Ascending aorta (tissue), 2 donors: ENCODE measurements at regions of chr4 and their contacts with region 1.

Region 1: GRCh38 chr4:6986781-6987587 is 56.2 kb upstream of the TADA2B start:
- DNase-seq: peak; percentile 75 to 96
- H3K4me3 ChIP-seq: peak overlapping the region; percentile 65 to 83
- H3K27ac ChIP-seq: peak overlapping the region; percentile 92
- H3K4me1 ChIP-seq: peaks cover 9 to 31% of the 10 kb centered on the region in 2 donors
- H3K27me3 ChIP-seq: no peaks in the 10 kb centered on the region
- CTCF ChIP-seq: no peak

Region 2: DNA sequence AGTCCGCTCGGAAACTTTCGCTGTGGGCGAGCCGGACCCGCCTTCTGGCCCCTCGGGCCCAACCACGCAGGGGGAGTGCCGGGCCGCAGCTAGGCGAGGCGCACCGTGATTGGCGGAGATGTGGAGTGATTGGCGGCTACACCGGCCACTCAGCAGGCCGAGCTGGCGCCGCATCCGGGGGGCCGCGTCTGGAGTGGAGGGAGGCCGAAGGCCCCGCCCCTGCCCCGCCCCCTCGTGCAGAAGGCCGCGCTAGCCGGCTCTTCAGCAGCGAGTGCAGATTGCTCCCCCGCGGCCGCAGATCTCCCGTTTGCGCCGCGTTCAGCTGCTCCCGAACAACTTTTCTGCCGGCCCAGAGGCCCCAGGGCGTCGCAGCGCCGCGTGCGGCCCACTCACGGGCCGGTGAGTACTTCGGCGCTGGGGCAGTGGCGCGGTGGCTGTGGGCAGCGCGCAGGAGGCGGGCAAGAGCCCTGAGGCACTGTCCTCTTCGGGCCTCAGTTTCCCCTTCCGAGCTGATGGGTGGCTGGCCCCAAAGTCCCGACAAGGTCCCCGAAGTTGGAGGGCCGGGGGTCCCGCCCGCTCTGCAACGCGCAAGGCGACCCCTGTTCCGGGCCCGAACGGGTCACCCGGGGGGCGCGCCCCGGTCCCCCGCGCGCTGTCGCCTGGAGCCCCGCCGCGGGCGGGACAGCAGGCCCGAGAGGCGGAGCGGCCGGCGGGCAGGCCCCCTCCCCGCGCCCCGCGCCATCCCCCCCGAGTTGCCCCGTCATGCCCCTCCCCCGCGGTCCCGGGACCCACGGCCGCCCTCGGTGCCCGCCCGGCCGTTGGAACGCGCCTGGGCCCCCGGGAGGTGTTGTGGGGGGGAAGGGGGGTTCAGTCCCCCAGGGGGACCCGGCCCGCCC is 717.1 kb before region 1 on chr4 and contains the start of gene WFS1:
- intact Hi-C with region 1: loop called (anchors 2 kb)
- DNase-seq: peak; percentile 92 to 99
- H3K4me3 ChIP-seq: peak within 1 kb of the TSS; percentile 82 to 95
- H3K27ac ChIP-seq: peak within 1 kb of the TSS; percentile 87
- H3K4me1 ChIP-seq: peaks cover 25 to 38% of the 10 kb centered on the region in 2 donors
- H3K27me3 ChIP-seq: no peaks in the 10 kb centered on the region
- CTCF ChIP-seq: no peak
- total RNA-seq, gene WFS1: 166 TPM

Region 3: GRCh38 chr4:6372649-6373525 is 614.1 kb before region 1 on chr4:
- intact Hi-C with region 1: no loop called
- DNase-seq: no peak
- H3K4me3 ChIP-seq: no peak overlapping the region
- H3K27ac ChIP-seq: no peak overlapping the region
- H3K4me1 ChIP-seq: no peaks in the 10 kb centered on the region
- H3K27me3 ChIP-seq: no peaks in the 10 kb centered on the region
- CTCF ChIP-seq: no peak

Region 4: DNA sequence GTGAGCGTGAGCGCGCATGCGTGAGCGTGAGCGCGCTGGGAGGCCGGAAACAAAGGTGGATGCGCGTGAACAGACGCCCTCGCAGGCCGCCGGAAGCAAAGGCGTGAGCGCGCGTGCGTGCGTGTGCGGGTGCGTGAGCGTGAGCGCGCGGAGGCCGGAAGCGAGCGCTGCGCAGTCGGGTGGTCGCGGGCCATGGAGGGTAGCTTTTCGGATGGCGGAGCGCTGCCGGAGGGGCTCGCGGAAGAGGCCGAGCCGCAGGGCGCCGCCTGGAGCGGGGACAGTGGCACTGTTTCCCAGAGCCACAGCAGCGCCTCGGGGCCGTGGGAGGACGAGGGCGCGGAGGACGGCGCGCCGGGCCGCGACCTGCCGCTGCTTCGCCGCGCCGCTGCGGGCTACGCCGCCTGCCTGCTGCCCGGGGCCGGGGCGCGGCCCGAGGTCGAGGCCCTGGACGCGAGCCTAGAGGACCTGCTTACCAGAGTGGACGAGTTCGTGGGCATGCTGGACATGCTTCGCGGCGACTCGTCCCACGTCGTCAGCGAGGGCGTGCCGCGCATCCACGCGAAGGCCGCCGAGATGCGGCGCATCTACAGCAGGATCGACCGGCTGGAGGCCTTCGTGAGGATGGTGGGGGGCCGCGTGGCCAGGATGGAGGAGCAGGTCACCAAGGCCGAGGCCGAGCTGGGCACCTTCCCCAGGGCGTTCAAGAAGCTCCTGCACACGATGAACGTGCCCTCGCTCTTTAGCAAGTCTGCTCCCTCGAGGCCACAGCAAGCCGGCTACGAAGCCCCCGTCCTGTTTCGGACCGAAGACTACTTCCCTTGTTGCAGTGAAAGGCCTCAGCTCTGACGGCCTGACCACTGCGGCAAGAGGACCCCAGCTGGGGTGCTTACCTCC is 270.7 kb before region 1 on chr4 and contains the start of gene BLOC1S4:
- intact Hi-C with region 1: loop called (anchors 2 kb)
- DNase-seq: peak; percentile 36 to 91
- H3K4me3 ChIP-seq: peak within 1 kb of the TSS; percentile 87 to 98
- H3K27ac ChIP-seq: peak within 1 kb of the TSS; percentile 88 to 95
- H3K4me1 ChIP-seq: peaks cover 4 to 14% of the 10 kb centered on the region in 2 donors
- H3K27me3 ChIP-seq: no peaks in the 10 kb centered on the region
- CTCF ChIP-seq: peak; percentile 21 to 31 (median 23)
- total RNA-seq, gene BLOC1S4: 37.5 TPM

Region 5: GRCh38 chr4:6909073-6909965 is 77.7 kb before region 1 on chr4 and contains the start of gene TBC1D14:
- intact Hi-C with region 1: loop called (anchors 1 kb)
- DNase-seq: peak; percentile 54 to 93
- H3K4me3 ChIP-seq: peak within 1 kb of the TSS; percentile 84 to 94
- H3K27ac ChIP-seq: peak within 1 kb of the TSS; percentile 97 to 99
- H3K4me1 ChIP-seq: peaks cover 0 to 32% of the 10 kb centered on the region in 2 donors
- H3K27me3 ChIP-seq: no peaks in the 10 kb centered on the region
- CTCF ChIP-seq: peak in 1 of 3 experiments; percentile 4
- total RNA-seq, gene TBC1D14: 26.4 TPM

Region 6: DNA sequence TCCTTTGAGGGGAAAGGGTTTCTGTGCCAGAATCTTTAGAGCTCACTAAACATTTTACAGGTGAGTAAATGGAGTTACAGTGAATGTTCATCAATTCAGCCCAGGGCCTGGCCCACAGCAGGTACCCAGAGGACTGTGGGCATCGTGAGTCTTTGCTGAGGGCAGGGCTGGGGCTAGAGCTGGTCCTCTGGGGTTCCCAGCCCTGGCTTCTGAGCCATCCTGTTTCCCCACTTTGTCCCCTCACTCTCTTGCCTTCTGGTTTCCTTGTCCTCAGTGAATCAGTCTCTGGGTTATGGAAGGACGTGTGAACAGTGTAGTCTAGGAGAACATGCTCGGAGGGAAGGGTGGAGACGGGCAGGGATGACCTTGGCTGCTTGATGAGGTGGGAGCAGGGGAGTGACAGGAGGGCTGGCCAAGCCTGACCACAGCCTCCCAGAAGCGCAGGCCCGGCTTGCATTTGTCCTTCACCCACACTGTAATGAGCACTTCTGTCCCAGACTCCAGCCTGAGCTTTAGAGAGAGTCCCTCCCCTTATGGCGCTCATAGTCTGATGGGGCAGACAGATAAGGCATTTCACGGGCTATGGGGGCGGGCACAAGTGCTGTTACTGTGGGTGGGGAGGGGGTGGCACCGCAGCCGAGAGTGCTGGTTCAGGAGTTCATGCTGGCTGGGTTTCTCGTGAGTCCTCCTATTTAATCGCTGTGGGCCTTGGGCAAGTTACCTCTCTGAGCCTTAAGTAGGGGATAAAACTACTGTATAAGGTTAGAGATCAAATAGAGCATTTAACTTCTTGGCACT is 60.1 kb before region 1 on chr4:
- intact Hi-C with region 1: no loop called
- DNase-seq: no peak
- H3K4me3 ChIP-seq: no peak overlapping the region
- H3K27ac ChIP-seq: peak overlapping the region in 1 of 2 donors; percentile 2
- H3K4me1 ChIP-seq: peaks cover 2 to 4% of the 10 kb centered on the region in 2 donors
- H3K27me3 ChIP-seq: no peaks in the 10 kb centered on the region
- CTCF ChIP-seq: no peak

Region 7: DNA sequence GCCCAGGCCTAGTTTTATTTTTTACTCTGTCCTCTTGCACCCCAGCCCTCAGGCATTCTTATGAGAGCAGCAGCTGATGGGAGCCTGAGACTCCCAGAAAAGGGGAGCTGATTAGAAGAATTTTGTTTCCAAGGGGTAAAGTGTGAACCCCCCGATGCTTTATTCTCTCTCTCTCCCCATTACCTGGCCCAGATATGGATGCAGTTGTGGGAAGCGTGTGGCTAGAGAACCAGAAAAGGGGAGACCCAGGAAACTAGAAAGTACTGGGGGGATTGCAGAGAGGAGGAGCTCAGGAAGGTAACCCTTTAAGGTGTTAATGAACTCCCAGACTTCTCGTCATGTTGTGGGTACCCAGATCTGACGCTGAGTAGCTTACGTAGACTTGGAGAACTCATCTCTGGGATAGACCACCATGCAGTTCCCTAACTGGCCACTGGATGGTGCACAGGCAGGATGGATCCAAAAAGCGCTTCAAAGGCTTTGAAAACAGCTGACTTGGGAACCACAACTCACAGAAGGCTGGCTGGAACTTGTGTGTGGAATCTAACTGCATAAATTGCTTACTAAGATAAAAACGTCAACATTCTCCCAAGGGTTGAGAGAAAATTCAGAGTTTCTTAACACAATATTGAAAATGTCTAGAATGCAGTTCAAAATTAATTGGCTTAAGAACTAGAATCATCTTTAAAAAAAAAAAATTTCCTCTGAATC is 12.7 kb before region 1 on chr4:
- intact Hi-C with region 1: loop called (anchors 1 kb)
- DNase-seq: peak in 1 of 2 donors; percentile 89
- H3K4me3 ChIP-seq: no peak overlapping the region
- H3K27ac ChIP-seq: no peak overlapping the region
- H3K4me1 ChIP-seq: no peaks in the 10 kb centered on the region
- H3K27me3 ChIP-seq: no peaks in the 10 kb centered on the region
- CTCF ChIP-seq: peak; percentile 90 to 99 (median 96)

Region 8: DNA sequence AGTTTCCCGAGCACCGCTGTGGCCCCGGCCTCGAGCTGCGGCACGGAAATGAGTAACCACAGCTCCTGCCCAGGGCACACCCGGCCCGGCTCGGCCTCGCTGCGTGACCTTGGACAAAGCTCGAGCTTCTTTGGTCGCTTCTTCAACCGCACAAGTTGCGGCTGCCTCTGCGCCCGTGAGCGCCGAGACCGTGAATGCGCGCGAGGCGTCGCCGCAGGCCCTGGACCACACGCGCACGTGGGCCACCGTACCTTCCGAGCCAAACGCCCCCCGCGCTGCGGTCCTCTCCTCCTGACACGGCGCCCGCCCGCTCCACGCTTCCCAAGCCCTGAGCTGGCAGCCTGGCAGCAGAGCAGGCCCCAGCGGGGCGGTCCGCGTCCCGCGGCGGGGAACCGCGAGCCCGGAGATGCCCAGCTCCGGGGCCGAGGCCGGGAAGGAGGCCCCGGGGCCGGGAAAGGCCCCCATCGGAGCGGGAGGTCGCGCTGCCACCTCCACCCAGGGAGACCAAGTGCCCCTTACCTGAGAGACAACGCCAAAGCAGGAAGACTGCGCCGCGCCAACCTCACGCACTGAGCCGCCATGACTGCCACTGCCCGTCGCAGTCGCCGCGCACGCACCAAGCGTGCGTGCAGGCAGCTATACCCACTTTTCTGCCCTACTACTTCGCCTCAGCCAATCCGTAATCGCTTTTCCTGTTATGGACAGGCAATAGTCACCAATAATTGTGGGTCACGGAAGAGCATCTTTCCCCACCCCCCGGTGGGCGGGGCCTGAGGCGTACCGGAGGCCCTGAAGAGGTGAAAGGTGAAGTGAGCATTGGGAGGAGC is 80.7 kb after region 1 on chr4 and contains the start of gene GRPEL1:
- intact Hi-C with region 1: loop called (anchors 1 kb)
- DNase-seq: peak; percentile 98 to 100
- H3K4me3 ChIP-seq: peak within 1 kb of the TSS; percentile 90 to 94
- H3K27ac ChIP-seq: peak within 1 kb of the TSS; percentile 86 to 95
- H3K4me1 ChIP-seq: peaks cover 10 to 18% of the 10 kb centered on the region in 2 donors
- H3K27me3 ChIP-seq: no peaks in the 10 kb centered on the region
- CTCF ChIP-seq: peak in 1 of 3 experiments; percentile 4
- total RNA-seq, gene GRPEL1: 42.5 TPM

Region 9: GRCh38 chr4:7206911-7207567 is 220.1 kb after region 1 on chr4:
- intact Hi-C with region 1: loop called (anchors 2 kb)
- DNase-seq: peak; percentile 51 to 92
- H3K4me3 ChIP-seq: peak overlapping the region in 1 of 2 donors; percentile 15
- H3K27ac ChIP-seq: peak overlapping the region; percentile 70 to 80
- H3K4me1 ChIP-seq: peaks cover 5 to 21% of the 10 kb centered on the region in 2 donors
- H3K27me3 ChIP-seq: no peaks in the 10 kb centered on the region
- CTCF ChIP-seq: no peak